Right ventricle myocardium superior (tissue), 1 donor: ENCODE measurements at regions of chr1 and their contacts with region 1.

Region 1: GRCh38 chr1:117758444-117759316 is 152.8 kb downstream of the TENT5C start:
- DNase-seq: peak; percentile 62
- ATAC-seq: peak; percentile 95

Region 2: DNA sequence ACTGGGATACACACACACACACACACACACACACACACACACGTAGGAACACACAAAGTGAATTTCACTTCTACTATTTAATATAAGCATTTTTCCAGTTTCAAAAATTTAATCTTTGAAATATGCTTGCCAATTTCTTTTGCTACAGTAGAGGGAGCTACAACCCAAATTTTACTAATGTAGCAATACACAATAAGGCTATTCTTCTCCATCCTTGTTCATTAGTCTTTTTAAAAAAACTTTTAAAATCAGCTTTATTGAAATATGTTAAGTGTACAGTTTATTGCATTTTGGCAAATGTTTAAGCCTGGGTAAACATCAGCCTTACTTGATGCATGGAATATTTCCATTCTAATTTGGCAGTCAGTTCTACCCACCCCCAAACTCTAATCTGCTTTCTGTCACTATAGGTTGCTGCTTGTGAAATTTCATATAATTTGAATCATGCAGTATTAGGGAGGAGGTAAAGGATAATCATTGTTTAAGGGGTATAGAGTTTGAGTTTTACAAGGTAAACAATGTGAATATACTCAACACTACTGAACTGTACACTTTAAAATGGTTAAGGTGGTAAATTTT is 245.8 kb before region 1 on chr1:
- intact Hi-C with region 1: loop called (anchors 5 kb)
- DNase-seq: no peak
- ATAC-seq: no peak

Region 3: DNA sequence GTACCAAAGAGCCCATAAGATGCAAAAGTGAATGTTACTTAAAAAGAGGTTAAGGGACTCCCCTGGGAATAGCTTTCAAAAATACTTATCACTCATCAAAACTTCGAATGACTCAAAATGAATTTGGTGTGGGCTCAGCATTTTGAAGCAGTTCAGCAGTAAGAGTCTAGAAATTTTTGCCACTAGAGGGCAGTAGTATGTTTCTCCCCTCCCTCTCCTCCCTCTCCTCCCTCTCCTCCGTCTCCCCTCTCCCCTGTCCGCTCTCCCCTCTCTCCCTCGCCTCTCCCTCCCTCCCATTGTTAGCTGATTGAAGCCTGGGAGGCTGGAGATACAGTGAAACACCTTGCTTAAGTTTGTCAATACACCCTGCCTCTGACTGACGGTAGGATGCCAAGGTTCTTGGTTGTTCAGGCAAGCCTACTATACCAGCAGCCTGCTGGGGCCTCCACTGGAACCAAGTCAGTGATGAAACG is 223.6 kb before region 1 on chr1:
- intact Hi-C with region 1: loop called (anchors 5 kb)
- DNase-seq: no peak
- ATAC-seq: peak; percentile 94

Region 4: GRCh38 chr1:117605774-117606648 is 152.7 kb before region 1 on chr1 and contains the start of gene TENT5C:
- intact Hi-C with region 1: loop called (anchors 5 kb)
- DNase-seq: peak; percentile 98
- ATAC-seq: peak; percentile 96
- total RNA-seq, gene TENT5C: 18.7 TPM

Region 5: DNA sequence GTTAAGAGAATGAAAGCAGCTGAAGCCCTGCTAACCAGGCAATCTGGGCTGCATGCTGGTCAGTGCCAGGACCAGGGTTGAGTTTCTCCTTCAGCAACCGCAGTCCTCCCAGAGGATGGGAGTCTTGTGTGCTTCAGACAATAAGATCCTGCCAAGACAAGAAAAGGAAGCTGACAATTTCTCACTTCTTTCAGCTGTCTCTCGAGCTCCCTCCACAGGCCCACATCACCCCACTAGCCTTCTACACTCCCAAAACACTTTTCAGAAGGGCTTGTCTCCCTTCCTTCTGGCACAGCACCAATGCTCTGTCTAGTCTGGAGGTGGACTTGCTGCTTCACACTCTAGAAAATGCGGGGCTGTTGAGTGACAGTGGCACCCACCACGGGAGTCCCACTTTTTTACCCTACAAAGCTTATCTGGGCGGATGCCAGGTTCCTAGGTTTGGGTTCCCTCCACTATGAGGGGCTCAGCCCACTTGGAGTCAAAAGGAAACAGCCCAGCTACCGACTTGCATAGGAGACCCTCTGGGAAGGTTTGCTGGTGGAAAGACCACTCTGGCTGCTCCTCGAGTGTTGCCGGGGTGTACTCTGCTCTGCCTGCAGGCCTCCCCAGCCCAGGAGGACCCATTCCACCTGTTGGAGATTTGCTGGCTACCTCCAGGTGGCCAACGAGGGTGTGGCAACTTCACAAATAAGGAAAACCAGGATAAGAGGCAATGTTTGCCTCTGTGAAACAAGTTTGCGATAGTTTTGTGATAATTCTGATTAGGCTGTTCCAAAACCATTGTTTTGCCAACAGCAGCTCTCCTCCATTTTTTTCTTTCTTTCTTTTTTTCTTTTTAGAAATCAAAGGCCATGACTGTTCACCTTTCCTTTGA is 83.9 kb before region 1 on chr1:
- intact Hi-C with region 1: loop called (anchors 10 kb)
- DNase-seq: no peak
- ATAC-seq: no peak

Region 6: DNA sequence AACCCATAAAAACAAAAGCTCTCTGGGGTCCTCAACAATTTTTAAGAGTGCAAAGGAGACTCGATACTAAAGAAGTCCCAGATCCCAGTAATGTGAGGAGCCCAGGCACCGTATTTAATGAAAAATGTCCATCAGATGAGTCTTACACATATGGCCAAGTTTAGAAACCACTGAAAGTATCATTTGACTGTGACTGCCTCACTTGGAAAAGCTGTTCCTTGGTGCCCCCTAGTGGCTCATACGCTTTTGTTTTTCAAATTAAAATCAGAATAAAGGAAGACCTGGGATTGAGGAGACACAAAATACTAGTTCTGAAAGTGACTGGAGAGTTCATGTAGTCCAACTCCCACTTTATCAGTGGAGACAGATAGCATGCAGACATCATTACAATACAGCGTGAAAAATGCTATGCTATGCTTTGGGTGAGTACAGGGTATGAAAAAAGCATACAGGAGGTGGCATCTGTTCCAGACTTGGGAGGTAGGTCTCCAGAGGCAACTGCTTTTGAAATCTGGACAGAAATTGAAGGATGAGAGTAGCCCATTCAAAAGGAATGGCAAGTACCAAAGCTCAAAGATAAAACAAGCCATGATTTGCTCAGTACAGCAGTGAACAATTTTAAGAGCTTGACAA is 136.9 kb after region 1 on chr1:
- intact Hi-C with region 1: loop called (anchors 5 kb)
- DNase-seq: no peak
- ATAC-seq: peak; percentile 41